SK-N-SH (cell line): ENCODE measurements at regions of chr1 and their contacts with region 1.

Region 1: GRCh38 chr1:15820478-15820877 is 13.0 kb upstream of the UQCRHL start:
- DNase-seq: no peak
- H3K4me3 ChIP-seq: no peak overlapping the region
- H3K27ac ChIP-seq: no peak overlapping the region
- H3K4me1 ChIP-seq: no peaks in the 10 kb centered on the region
- H3K27me3 ChIP-seq: no peaks in the 10 kb centered on the region
- CTCF ChIP-seq: no peak
- EP300 ChIP-seq: no peak
- RAD21 ChIP-seq: no peak

Region 2: GRCh38 chr1:15771836-15772515 is 48.5 kb before region 1 on chr1:
- CTCF ChIA-PET with region 1: no interaction called
- POLR2A ChIA-PET with region 1: no interaction called
- DNase-seq: no peak
- H3K4me3 ChIP-seq: no peak overlapping the region
- H3K27ac ChIP-seq: no peak overlapping the region
- H3K4me1 ChIP-seq: no peaks in the 10 kb centered on the region
- H3K27me3 ChIP-seq: no peaks in the 10 kb centered on the region
- CTCF ChIP-seq: no peak
- EP300 ChIP-seq: no peak
- RAD21 ChIP-seq: no peak

Region 3: DNA sequence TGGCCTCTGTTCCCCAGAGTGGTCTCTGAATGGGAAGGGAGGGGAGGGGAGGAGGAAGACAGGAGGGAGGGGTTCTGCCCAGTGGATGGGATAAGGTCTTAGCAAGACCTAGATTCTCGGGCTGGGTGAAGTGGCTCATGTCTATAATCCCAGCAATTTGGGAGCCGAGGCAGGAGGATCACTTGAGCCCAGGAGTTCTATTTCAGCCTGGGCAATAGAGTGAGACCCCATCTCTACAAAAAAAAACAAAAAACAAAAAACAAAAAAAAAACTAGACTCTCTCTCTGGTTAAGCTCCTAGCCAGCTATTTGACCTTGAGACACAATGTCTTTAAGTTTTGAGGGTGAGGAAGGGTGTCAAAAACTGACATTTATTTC is 24.4 kb before region 1 on chr1:
- CTCF ChIA-PET with region 1: interaction called, 17 read pairs
- POLR2A ChIA-PET with region 1: no interaction called
- DNase-seq: no peak
- H3K4me3 ChIP-seq: no peak overlapping the region
- H3K27ac ChIP-seq: peak overlapping the region; percentile 20 to 97; a peak in 3 of 4 replicates
- H3K4me1 ChIP-seq: peaks cover 20 to 45% of the 10 kb centered on the region in 2 experiments; a peak in 3 of 4 replicates
- H3K27me3 ChIP-seq: no peaks in the 10 kb centered on the region
- CTCF ChIP-seq: no peak
- EP300 ChIP-seq: no peak
- RAD21 ChIP-seq: no peak

Region 4: GRCh38 chr1:15803354-15803753 is 17.1 kb before region 1 on chr1:
- CTCF ChIA-PET with region 1: interaction called, 21 read pairs
- POLR2A ChIA-PET with region 1: no interaction called
- DNase-seq: peak; percentile 45
- H3K4me3 ChIP-seq: no peak overlapping the region
- H3K27ac ChIP-seq: no peak overlapping the region
- H3K4me1 ChIP-seq: peaks cover 19 to 29% of the 10 kb centered on the region in 2 experiments; a peak in 3 of 4 replicates
- H3K27me3 ChIP-seq: no peaks in the 10 kb centered on the region
- CTCF ChIP-seq: peak; percentile 58
- EP300 ChIP-seq: no peak
- RAD21 ChIP-seq: peak; percentile 65

Region 5: DNA sequence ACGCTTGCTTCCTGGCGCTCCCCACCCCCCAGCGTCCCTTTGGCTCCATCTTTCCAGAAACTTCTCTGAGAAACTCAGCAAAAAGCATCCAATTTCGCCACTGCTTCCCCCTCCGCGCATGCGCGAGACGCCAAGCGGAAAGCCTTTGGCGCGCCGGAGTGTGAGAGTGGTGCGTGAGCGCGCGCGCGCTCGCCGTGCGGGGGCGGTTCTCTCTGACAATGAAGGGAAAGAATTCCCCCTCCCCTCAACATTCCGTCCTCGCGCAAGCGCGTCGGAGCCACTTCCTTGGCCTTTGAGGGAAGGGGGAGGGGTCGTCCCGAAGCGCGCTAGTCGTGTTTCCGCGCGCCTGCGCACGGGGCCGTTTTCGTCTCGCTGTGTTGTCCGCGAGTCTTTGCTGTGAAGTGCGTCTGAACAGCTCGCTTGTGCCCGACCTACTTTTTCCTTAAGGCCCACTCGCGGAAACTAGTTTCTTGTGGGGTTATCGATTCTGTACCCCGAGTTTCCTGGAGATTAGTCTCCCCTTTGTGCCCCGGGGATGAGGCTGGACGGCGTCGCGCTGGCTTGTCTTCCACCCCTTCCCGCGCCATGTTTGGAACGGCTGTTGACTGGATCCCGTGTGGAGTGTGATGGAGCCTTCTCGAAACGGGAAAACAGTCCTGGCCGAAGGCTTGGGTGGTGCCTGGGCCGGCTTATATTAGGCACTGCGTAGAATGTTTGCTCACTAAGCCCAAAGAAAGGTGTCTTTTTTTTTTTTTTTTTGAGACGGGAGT is 15.4 kb after region 1 on chr1:
- CTCF ChIA-PET with region 1: interaction called, 15 read pairs
- POLR2A ChIA-PET with region 1: interaction called, 5 read pairs
- DNase-seq: peak; percentile 96
- H3K4me3 ChIP-seq: peak overlapping the region; percentile 61 to 98
- H3K27ac ChIP-seq: peak overlapping the region; percentile 98 to 100
- H3K4me1 ChIP-seq: peaks cover 3 to 12% of the 10 kb centered on the region in 2 experiments; a peak in 2 of 4 replicates
- H3K27me3 ChIP-seq: no peaks in the 10 kb centered on the region
- CTCF ChIP-seq: no peak
- EP300 ChIP-seq: peak in 1 of 2 experiments; percentile 46; a peak in 3 of 4 replicates
- RAD21 ChIP-seq: no peak; the same call in 1 of the 2 replicates

Region 6: DNA sequence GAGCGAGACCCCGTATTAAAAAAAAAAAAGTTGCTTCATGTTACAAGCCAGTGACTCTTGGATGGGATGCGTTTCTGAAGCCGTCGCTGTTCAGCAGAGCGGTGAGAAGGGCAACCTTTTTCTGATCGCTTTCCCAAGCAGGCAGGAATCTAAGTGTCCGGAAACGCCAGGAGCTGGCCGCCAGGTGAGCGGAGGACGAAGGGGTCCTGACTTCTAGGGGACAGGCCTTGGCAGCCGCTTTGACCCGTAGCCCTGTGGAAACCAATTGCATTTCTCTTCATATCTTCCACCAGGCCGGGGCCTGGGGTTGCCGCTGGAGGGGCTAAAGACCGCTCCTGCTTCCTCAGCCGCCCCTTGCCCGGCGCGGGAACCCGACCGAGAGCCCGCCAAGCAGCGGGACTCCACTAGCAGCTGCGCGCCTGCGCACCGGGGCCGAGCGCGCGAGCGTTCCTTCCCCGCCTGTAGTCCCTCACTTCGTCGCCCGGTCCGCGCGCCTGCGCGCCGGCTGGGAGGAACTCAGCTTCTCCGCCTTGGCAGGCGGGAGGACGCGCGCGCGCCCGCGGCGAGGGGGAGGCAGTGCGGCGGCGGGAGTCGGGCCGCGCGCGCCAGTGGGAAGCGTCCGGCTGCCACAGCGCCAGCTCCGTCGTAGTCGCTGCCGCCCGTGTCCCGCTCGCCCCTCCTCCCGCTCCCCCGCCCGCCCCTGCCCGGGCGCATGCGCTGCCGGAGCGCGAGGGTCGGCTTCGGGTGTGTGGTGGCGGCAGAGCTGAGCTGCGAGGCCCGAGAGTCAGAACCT is 26.8 kb after region 1 on chr1 and contains the start of gene SPEN:
- CTCF ChIA-PET with region 1: interaction called, 11 read pairs
- POLR2A ChIA-PET with region 1: interaction called, 6 read pairs
- DNase-seq: peak; percentile 95
- H3K4me3 ChIP-seq: peak within 1 kb of the TSS; percentile 72 to 80
- H3K27ac ChIP-seq: peak within 1 kb of the TSS; percentile 98
- H3K4me1 ChIP-seq: peaks cover 7 to 24% of the 10 kb centered on the region in 2 experiments; a peak in 3 of 4 replicates
- H3K27me3 ChIP-seq: no peaks in the 10 kb centered on the region
- CTCF ChIP-seq: no peak
- EP300 ChIP-seq: 0 out of 4 replicates have a peak, but pooled peaks of 1 of the 2 experiments have one; percentile 21
- RAD21 ChIP-seq: no peak; the same call in 1 of the 2 replicates
- polyA plus RNA-seq, gene SPEN: 3.2 and 6.1 TPM in 2 replicates

Region 7: GRCh38 chr1:15923241-15923640 is 102.8 kb after region 1 on chr1:
- CTCF ChIA-PET with region 1: interaction called, 12 read pairs
- POLR2A ChIA-PET with region 1: no interaction called
- DNase-seq: no peak
- H3K4me3 ChIP-seq: no peak overlapping the region
- H3K27ac ChIP-seq: peak overlapping the region in 1 of 2 experiments; percentile 48; a peak in 2 of 4 replicates
- H3K4me1 ChIP-seq: peaks cover 4 to 17% of the 10 kb centered on the region in 2 experiments
- H3K27me3 ChIP-seq: no peaks in the 10 kb centered on the region
- CTCF ChIP-seq: no peak
- EP300 ChIP-seq: no peak
- RAD21 ChIP-seq: no peak

Region 8: GRCh38 chr1:15994590-15995351 is 174.3 kb after region 1 on chr1:
- CTCF ChIA-PET with region 1: interaction called, 33 read pairs
- POLR2A ChIA-PET with region 1: no interaction called
- DNase-seq: peak; percentile 86
- H3K4me3 ChIP-seq: no peak overlapping the region
- H3K27ac ChIP-seq: no peak overlapping the region
- H3K4me1 ChIP-seq: no peaks in the 10 kb centered on the region
- H3K27me3 ChIP-seq: no peaks in the 10 kb centered on the region
- CTCF ChIP-seq: peak; percentile 85
- EP300 ChIP-seq: no peak
- RAD21 ChIP-seq: peak; percentile 91